Common myeloid progenitor, CD34-positive (primary cell): ENCODE measurements at regions of chr14 and their contacts with region 1.

Region 1: DNA sequence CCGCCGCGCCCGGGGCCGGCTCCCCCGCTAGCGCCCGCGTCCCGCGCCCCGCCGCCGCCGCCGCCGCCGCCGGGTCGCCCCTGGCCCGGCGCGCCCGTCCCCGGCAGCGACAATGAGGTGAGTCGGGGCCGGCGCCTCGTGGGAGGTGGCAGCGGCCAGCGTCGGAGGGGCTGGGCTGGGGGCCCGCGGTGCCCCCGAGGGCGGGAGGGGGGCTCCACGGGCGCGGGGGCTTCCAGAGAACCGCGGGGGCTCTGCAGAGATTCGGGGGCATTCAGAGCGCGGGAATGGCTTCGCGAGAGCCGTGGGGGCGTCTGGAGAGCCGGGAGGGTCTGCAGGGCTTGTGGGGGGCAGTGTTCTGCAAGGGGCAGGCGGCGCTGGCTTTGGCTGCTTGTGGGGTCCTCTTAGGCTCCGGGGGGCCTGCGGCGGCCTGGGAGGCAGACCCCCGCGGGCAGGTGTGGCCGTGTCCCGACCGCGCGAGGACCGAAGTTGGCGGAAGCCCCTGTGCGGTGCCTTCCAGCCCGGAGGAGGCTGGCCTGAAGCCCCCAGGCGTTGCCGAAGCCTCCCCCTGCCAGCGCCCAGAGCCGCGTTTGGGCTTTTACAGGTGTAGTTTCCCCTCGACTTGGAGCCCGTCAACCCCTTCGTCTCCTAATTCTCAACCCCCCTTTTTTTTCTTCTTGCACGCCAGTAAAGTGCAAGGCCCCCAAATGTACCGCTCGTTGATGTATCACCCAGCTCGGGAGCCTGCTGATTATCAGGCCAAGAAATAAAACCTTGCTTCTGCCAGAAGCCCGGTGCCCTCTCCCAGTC is 93.1 kb upstream of the EVL start:
- DNase-seq: peak in 2 of 3 donors; percentile 40 to 55
- H3K4me3 ChIP-seq: peak overlapping the region; percentile 70 to 85 (median 81)
- H3K27ac ChIP-seq: no peak overlapping the region
- H3K4me1 ChIP-seq: peaks cover 7 to 12% (median 9%) of the 10 kb centered on the region in 4 experiments
- H3K27me3 ChIP-seq: peaks cover 0 to 22% (median 8%) of the 10 kb centered on the region in 5 experiments

Region 2: GRCh38 chr14:100025111-100025510 is 53.0 kb after region 1 on chr14:
- CTCF ChIA-PET with region 1: interaction called, 21 read pairs
- POLR2A ChIA-PET with region 1: no interaction called
- DNase-seq: peak; percentile 47 to 70 (median 60)
- H3K4me3 ChIP-seq: no peak overlapping the region
- H3K27ac ChIP-seq: no peak overlapping the region
- H3K4me1 ChIP-seq: peaks cover 0 to 14% (median 3%) of the 10 kb centered on the region in 4 experiments
- H3K27me3 ChIP-seq: no peaks in the 10 kb centered on the region